Activated T-helper 2 cell treated with anti-CD3 and anti-CD28 coated beads, Interferon-gamma antibody, Interleukin-2, Interleukin-4, amounts not matched to agents 10 μg/mL and 5 μg/mL and 100 μg/mL, durations not matched to agents 14 hours and 24 hours and 36 hours (primary cell): ENCODE measurements at regions of chr6 and their contacts with region 1.

Region 1: GRCh38 chr6:144284783-144285547 is at the start of gene UTRN:
- DNase-seq: peak; percentile 41
- H3K4me3 Mint-ChIP-seq: peak within 1 kb of the TSS; percentile 91
- H3K27ac Mint-ChIP-seq: peak within 1 kb of the TSS; percentile 78
- H3K4me1 Mint-ChIP-seq: peaks cover 11% of the 10 kb centered on the region
- H3K27me3 Mint-ChIP-seq: peaks cover 21% of the 10 kb centered on the region
- total RNA-seq, gene UTRN: 48.6 and 54.6 TPM in 2 replicates

Region 2: GRCh38 chr6:144055121-144055931 is 229.6 kb before region 1 on chr6:
- intact Hi-C with region 1: loop called (anchors 5 kb)
- DNase-seq: peak; percentile 36
- H3K4me3 Mint-ChIP-seq: peak overlapping the region; percentile 75
- H3K27ac Mint-ChIP-seq: peak overlapping the region; percentile 94
- H3K4me1 Mint-ChIP-seq: peaks cover 40% of the 10 kb centered on the region
- H3K27me3 Mint-ChIP-seq: no peaks in the 10 kb centered on the region

Region 3: GRCh38 chr6:144190593-144190992 is 94.4 kb before region 1 on chr6:
- intact Hi-C with region 1: no loop called
- DNase-seq: no peak
- H3K4me3 Mint-ChIP-seq: no peak overlapping the region
- H3K27ac Mint-ChIP-seq: no peak overlapping the region
- H3K4me1 Mint-ChIP-seq: no peaks in the 10 kb centered on the region
- H3K27me3 Mint-ChIP-seq: no peaks in the 10 kb centered on the region

Region 4: DNA sequence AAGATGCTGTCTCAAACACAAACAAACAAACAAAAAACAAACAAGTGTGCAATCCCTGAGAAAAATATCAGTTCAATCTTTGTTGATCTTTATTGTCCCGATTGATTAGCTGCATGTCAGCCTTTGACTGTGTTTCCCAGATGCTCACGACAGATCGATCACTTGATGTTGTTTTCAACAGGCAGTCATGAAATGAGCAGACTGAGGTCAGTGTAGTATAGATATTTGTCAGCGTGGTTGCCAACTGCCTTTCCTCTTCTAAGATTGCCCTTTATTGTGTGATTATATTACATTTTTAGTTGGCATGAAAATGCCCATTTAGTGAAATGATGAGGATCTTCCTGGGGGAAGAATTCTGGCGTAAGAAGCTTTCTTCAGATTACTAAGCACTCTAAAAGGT is 25.8 kb after region 1 on chr6:
- intact Hi-C with region 1: loop called (anchors 2 kb)
- DNase-seq: peak; percentile 26
- H3K4me3 Mint-ChIP-seq: peak overlapping the region; percentile 11
- H3K27ac Mint-ChIP-seq: peak overlapping the region; percentile 46
- H3K4me1 Mint-ChIP-seq: peaks cover 44% of the 10 kb centered on the region
- H3K27me3 Mint-ChIP-seq: no peaks in the 10 kb centered on the region

Region 5: GRCh38 chr6:144469144-144469575 is 184.2 kb after region 1 on chr6:
- intact Hi-C with region 1: loop called (anchors 2 kb)
- DNase-seq: no peak
- H3K4me3 Mint-ChIP-seq: peak overlapping the region; percentile 28
- H3K27ac Mint-ChIP-seq: peak overlapping the region; percentile 69
- H3K4me1 Mint-ChIP-seq: peaks cover 29% of the 10 kb centered on the region
- H3K27me3 Mint-ChIP-seq: no peaks in the 10 kb centered on the region

Region 6: GRCh38 chr6:144559865-144560593 is 275.1 kb after region 1 on chr6:
- intact Hi-C with region 1: loop called (anchors 10 kb)
- DNase-seq: peak; percentile 56
- H3K4me3 Mint-ChIP-seq: peak overlapping the region; percentile 60
- H3K27ac Mint-ChIP-seq: peak overlapping the region; percentile 86
- H3K4me1 Mint-ChIP-seq: peaks cover 36% of the 10 kb centered on the region
- H3K27me3 Mint-ChIP-seq: no peaks in the 10 kb centered on the region